Activated T-helper 2 cell treated with anti-CD3 and anti-CD28 coated beads, Interferon-gamma antibody, Interleukin-2, Interleukin-4, amounts not matched to agents 10 μg/mL and 5 μg/mL and 100 μg/mL, durations not matched to agents 14 hours and 24 hours and 36 hours (primary cell): ENCODE measurements at regions of chr15 and their contacts with region 1.

Region 1: GRCh38 chr15:39966521-39966920 is 32.6 kb downstream of the EIF2AK4 start:
- DNase-seq: no peak
- H3K4me3 Mint-ChIP-seq: no peak overlapping the region
- H3K27ac Mint-ChIP-seq: no peak overlapping the region
- H3K4me1 Mint-ChIP-seq: peaks cover 51% of the 10 kb centered on the region
- H3K27me3 Mint-ChIP-seq: no peaks in the 10 kb centered on the region

Region 2: GRCh38 chr15:39942101-39942752 is 24.3 kb before region 1 on chr15:
- intact Hi-C with region 1: loop called (anchors 2 kb)
- DNase-seq: no peak
- H3K4me3 Mint-ChIP-seq: no peak overlapping the region
- H3K27ac Mint-ChIP-seq: no peak overlapping the region
- H3K4me1 Mint-ChIP-seq: peaks cover 31% of the 10 kb centered on the region
- H3K27me3 Mint-ChIP-seq: no peaks in the 10 kb centered on the region

Region 3: DNA sequence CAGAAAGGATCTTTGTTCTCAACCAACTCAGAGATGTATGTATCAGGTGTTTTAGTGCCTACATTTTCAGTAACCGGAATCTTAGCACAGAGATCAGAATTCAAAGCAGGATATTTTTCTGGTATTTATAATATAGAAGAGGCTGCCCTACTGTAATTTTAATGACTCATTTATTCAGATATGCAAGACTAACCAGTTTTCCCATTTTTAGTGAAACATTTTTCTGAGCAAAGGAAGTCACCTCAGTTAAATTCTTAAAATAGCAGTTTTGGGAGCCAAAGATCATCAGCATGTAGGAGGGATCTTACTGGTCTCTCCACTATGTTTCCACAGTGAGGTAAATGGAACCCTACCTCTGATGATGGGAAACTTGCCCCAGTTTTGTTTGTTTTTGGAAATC is 30.5 kb after region 1 on chr15:
- intact Hi-C with region 1: no loop called
- DNase-seq: no peak
- H3K4me3 Mint-ChIP-seq: no peak overlapping the region
- H3K27ac Mint-ChIP-seq: no peak overlapping the region
- H3K4me1 Mint-ChIP-seq: no peaks in the 10 kb centered on the region
- H3K27me3 Mint-ChIP-seq: no peaks in the 10 kb centered on the region

Region 4: DNA sequence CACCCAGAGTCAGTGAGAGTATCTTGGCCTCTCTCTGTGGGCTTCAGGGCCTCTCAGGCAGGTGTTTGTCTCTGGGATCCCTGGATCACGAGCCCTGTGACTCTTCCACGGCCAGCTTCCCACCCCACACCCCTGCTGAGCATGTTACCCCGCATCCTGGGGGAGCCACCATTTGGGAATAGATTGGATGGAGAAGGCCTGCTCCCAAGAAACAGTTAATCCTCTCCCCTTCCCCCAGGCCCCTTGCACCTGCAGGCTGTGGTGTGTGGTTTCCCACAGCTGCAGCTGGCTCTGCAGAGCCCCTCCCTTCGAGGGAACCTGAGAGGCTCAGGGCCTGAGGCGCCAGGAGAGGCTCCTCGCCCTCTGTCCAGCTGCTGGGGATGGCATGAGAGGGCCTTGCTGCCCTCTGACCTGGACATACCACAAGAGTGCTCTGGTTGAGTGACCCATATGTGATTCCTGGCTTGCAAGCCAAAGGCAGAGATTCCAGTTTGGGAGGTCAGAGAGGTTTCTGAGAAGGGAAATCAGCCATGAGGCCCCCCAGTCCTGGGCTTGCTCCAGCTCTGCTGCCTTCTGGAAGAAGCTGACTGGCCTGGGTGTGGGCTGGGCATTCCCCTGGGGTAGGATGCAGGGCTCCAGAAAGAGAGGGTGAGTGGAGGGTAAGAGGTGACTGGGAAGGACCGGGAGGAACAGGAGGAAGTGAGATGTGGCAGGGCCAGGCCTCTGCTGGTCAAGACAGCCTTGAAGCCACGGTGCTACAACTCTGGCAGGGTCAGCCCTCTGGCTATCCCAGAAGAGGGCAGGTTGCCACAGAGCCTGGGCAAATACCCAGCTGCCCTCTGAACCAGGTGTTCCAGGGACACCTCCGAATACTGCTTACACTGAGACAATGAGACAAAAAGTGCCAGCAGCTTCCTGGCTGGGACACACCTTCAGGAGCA is 88.4 kb after region 1 on chr15:
- intact Hi-C with region 1: no loop called
- DNase-seq: no peak
- H3K4me3 Mint-ChIP-seq: no peak overlapping the region
- H3K27ac Mint-ChIP-seq: peak overlapping the region; percentile 47
- H3K4me1 Mint-ChIP-seq: peaks cover 58% of the 10 kb centered on the region
- H3K27me3 Mint-ChIP-seq: no peaks in the 10 kb centered on the region